Breast epithelium (tissue), 4 donors: ENCODE measurements at regions of chr13 and their contacts with region 1.

Region 1: DNA sequence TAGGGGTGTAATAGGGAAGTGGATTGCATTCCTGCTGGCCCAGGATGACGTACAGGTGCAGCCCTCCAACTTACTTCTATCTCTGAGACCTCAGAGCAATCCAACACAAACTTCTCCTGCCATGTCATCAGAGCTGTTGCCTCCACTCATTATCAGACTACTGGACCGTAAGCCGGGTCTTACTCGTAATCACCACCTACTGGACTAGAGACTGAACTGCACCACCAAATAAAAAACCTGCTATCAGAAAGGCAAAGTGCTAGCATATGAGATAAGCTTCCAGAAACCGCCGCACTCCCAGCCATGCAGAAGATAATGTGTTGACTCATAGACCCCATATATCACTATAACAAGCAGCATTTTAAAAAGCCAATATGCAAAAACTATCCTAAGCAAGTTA is 102.0 kb downstream of the SLITRK1 start:
- DNase-seq: no peak
- H3K4me3 ChIP-seq: no peak overlapping the region
- H3K27ac ChIP-seq: no peak overlapping the region
- H3K4me1 ChIP-seq: no peaks in the 10 kb centered on the region
- H3K27me3 ChIP-seq: no peaks in the 10 kb centered on the region
- CTCF ChIP-seq: no peak
- POLR2A ChIP-seq: no peak

Region 2: DNA sequence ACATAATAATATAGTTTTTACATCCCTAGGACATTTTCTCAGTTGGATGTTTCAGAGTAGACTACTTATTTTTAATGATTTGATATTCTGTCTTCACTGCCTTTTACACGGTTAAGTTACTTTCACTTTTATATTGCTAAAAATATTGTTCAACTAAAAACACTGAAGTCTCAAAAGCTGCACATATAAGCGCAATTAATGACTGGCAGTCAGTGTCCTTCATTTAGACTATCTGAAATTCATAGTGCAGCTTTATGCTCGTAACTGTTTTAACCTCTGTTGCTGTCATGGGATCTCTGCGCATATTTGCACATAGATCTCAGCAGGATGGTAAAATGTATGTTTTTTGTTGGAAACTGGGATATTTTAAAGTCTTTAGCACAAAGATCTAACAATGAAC is 1154.7 kb after region 1 on chr13:
- intact Hi-C with region 1: no loop called
- DNase-seq: no peak
- H3K4me3 ChIP-seq: peak overlapping the region in 1 of 3 donors; percentile 13
- H3K27ac ChIP-seq: no peak overlapping the region
- H3K4me1 ChIP-seq: no peaks in the 10 kb centered on the region
- H3K27me3 ChIP-seq: no peaks in the 10 kb centered on the region
- CTCF ChIP-seq: no peak
- POLR2A ChIP-seq: no peak

Region 3: DNA sequence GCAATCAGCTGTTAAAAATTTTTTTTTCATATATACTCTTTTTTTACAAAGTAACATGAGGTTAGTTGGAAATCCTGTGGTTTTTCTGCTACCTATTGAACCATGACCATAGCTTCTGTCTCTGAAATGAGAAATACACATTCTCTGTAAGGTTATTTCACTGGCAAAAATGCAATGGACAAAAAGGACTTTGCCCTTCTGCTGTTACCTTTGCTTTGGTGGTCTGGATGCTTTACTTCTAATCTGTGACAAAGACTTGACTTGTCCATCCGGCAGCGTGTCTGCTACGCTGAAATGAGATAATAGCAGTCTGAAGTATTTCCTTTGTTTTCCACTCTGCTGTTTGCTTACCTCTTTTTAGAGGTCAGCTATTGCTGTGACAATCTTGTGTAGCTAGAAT is 1606.2 kb after region 1 on chr13:
- intact Hi-C with region 1: loop called (anchors 10 kb)
- DNase-seq: no peak
- H3K4me3 ChIP-seq: no peak overlapping the region
- H3K27ac ChIP-seq: no peak overlapping the region
- H3K4me1 ChIP-seq: no peaks in the 10 kb centered on the region
- H3K27me3 ChIP-seq: no peaks in the 10 kb centered on the region
- CTCF ChIP-seq: no peak
- POLR2A ChIP-seq: no peak